K562 (cell line): ENCODE measurements at regions of chr11 and their contacts with region 1.

Region 1: DNA sequence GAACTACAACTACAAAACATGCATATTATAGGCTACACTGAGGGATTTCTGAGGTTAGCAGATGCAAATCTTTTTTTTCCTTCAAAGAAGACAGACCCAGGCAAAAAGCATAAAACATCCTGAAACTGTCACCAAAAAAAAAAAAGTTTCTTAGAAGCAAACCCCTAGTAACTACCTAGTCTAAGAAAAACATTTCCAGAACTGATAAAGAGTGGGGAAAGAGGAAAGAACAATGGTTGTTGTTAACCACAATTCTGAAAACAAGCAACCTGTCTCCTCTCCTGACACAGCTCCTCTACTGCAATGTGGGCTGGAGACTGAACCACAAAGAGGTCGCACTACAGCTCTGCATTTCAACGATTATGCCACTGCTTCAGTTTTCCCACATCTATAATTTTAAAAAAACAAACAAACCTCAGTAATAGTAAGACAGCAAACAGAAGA is 15.0 kb downstream of the DENND5A start:
- DNase-seq: peak in 3 of 4 experiments; percentile 21 to 41 (median 39)
- ATAC-seq: peak; percentile 77
- H3K4me3 ChIP-seq: no peak overlapping the region
- H3K27ac ChIP-seq: peak overlapping the region; percentile 40; the same call in 1 of the 3 replicates
- H3K4me1 ChIP-seq: peaks cover 3 to 7% of the 10 kb centered on the region in 2 experiments; a peak in 4 of 5 replicates
- H3K27me3 ChIP-seq: no peaks in the 10 kb centered on the region
- CTCF ChIP-seq: no peak
- EP300 ChIP-seq: no peak
- POLR2A ChIP-seq: no peak
- RAD21 ChIP-seq: no peak

Region 2: DNA sequence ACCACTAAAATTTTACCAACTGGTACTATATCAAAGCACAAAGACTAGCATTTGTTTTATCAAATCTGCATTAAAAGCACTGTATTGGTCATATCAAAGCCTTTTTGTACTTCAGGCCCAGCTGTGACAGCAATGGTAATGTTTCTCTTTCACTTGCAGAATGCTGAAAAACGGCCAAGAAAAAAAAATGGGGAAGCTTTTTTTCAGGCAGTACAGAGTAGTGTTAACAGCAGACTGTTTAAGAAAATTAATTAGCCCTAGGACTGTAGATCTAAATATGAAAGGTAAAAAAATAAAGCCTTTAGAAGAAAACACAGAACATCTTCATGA is 18.3 kb before region 1 on chr11:
- CTCF ChIA-PET with region 1: no interaction called
- POLR2A ChIA-PET with region 1: interaction called, 14 read pairs
- in situ Hi-C with region 1: no loop called
- intact Hi-C with region 1: no loop called
- DNase-seq: no peak
- ATAC-seq: peak; percentile 35
- H3K4me3 ChIP-seq: no peak overlapping the region
- H3K27ac ChIP-seq: peak overlapping the region; percentile 0; the same call in 1 of the 3 replicates
- H3K4me1 ChIP-seq: peaks cover 13 to 20% of the 10 kb centered on the region in 2 experiments; a peak in 4 of 5 replicates
- H3K27me3 ChIP-seq: no peaks in the 10 kb centered on the region
- CTCF ChIP-seq: no peak
- EP300 ChIP-seq: no peak
- POLR2A ChIP-seq: no peak
- RAD21 ChIP-seq: no peak

Region 3: GRCh38 chr11:9259981-9260837 is 10.0 kb after region 1 on chr11:
- CTCF ChIA-PET with region 1: no interaction called
- POLR2A ChIA-PET with region 1: interaction called, 25 read pairs
- in situ Hi-C with region 1: no loop called
- intact Hi-C with region 1: loop called (anchors 2 kb)
- DNase-seq: peak in 1 of 4 experiments; percentile 23
- ATAC-seq: no peak
- H3K4me3 ChIP-seq: no peak overlapping the region
- H3K27ac ChIP-seq: no peak overlapping the region
- H3K4me1 ChIP-seq: peaks cover 0 to 17% of the 10 kb centered on the region in 2 experiments; a peak in 2 of 5 replicates
- H3K27me3 ChIP-seq: no peaks in the 10 kb centered on the region
- CTCF ChIP-seq: peak in 2 of 3 experiments; percentile 22 to 40; a peak in 2 of 6 replicates
- EP300 ChIP-seq: no peak
- POLR2A ChIP-seq: no peak
- RAD21 ChIP-seq: peak in 1 of 2 experiments; percentile 36; a peak in 2 of 4 replicates